Mammary epithelial cell (primary cell): ENCODE measurements at regions of chr9 and their contacts with region 1.

Region 1: DNA sequence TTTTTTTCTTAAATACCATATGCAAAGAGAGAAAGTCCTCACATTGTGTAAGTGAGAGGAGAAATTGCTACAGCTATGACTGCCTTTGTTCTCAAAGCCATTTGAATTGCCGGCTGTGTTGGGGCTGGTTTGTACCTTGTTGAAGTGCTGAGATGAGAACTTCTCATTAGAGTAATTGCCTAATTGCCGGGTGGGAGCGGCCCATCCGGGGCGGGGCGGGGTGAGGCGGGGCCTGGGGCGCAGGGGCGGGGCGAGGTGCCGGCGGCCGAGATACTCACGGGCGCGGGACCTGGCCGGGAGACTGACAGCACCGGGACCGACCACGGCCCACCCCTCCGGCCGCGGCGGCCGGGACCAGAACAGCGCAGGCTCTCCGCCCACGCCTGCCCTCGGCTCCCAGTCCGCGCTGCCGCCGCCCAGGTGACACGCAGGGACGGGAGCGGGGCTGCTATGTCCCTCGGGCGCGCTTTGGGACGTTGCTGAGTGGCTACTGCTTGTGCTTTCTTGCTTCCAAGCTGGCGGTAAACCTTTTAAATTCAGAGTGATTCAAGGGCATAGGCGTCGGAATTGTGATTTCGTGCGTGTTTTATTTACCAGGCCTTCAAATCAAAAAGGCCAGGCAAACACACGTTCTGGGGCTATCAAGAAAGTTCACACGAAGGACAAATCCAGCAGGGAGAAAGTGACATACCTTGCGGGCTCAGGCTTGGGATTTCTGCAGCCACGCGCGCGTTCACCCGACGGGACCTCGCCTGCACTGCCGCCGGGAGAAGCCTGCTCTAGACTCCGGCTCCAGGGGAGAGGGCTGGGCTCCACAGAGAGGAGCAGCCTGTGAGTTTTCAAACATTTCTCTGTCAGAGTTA is 269.1 kb downstream of the FANCC start:
- DNase-seq: peak; percentile 83
- H3K4me3 ChIP-seq: peak overlapping the region; percentile 61 to 66 (median 65)
- H3K27ac ChIP-seq: peak overlapping the region; percentile 78
- H3K4me1 ChIP-seq: peaks cover 15% of the 10 kb centered on the region
- H3K27me3 ChIP-seq: no peaks in the 10 kb centered on the region
- CTCF ChIP-seq: no peak

Region 2: GRCh38 chr9:95025213-95026147 is 23.0 kb before region 1 on chr9:
- CTCF ChIA-PET with region 1: no interaction called
- dilution Hi-C with region 1: no loop called
- in situ Hi-C with region 1: no loop called
- intact Hi-C with region 1: no loop called
- DNase-seq: peak; percentile 37
- H3K4me3 ChIP-seq: no peak overlapping the region
- H3K27ac ChIP-seq: no peak overlapping the region
- H3K4me1 ChIP-seq: peaks cover 39% of the 10 kb centered on the region
- H3K27me3 ChIP-seq: no peaks in the 10 kb centered on the region
- CTCF ChIP-seq: no peak

Region 3: DNA sequence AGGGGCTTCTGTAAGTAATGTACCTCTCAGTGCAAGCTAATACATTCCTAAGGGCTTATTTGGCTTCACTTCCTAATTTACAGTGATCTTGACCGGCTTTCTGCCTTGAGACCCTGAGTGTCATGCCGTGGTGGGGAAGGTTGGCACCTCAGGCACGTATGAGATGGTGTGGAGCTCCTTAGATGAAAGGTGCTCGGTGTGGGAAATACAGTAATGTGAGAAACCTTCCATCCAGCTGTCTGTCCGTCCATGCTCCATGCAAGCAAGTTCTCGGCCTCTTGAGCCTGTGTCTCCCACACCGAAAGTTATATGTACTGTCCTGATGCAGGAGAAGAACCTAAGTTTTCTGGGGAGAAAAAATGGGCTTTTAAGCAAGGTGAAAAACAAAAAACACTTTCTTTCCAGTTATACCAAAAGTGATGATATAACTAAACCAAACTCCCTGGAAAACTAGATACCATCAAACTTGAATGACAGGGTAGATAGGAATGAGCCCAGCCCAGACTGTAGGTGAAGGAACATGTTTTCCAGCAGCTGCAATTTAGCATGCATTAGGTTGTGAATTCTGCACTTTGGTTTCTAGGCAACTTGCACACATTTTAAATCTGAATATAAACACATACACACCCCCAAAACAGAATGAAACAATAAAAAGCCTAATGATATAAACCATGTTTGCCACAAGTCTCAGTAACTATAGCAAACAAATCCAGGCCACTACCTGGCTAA is 10.5 kb before region 1 on chr9:
- CTCF ChIA-PET with region 1: no interaction called
- dilution Hi-C with region 1: no loop called
- in situ Hi-C with region 1: no loop called
- intact Hi-C with region 1: loop called (anchors 1 kb)
- DNase-seq: peak; percentile 87
- H3K4me3 ChIP-seq: no peak overlapping the region
- H3K27ac ChIP-seq: peak overlapping the region; percentile 90
- H3K4me1 ChIP-seq: peaks cover 22% of the 10 kb centered on the region
- H3K27me3 ChIP-seq: no peaks in the 10 kb centered on the region
- CTCF ChIP-seq: no peak